CD8-positive, alpha-beta T cell (primary cell): ENCODE measurements at regions of chr7 and their contacts with region 1.

Region 1: DNA sequence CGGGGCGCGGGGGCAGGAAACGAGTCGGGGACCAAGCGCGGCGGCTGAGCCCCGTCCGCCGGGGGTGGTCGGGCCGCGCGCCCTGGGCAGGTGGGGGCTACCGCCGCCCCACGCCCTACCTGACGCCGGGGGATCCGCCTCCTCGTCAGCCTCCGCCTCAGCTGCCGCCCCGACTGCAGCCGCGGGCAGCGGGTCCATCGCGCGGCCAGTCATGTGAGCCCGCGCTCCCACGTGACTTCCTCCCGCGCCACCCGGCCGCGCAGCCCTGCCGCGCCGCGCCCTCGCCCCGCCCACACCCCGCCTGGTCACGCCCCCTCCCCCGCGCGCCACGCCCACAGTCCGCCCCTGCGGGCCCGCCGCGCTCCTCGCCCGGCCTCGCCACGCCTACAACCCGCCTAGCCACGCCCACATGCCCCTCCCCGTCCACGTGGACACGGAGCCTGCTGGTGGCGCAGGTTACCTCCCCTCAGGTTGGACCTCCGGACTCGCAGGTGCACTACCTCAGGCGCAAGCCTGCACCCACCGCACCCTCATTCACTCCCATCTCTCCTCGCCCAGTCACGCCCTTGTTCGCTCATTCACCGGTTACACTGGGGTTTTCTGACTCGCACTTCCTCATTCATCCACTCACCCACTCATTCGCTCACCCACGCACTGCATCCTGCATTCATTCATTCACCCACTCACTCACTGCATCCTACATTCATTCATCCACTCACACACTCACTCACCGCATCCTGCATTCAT is at the start of gene SNX8:
- DNase-seq: peak; percentile 93 to 99 (median 95)
- ATAC-seq: peak; percentile 88
- H3K4me3 ChIP-seq: peak within 1 kb of the TSS; percentile 75 to 76
- H3K4me3 Mint-ChIP-seq: no peak within 1 kb of the TSS
- H3K27ac ChIP-seq: peak within 1 kb of the TSS; percentile 43 to 54
- H3K27ac Mint-ChIP-seq: peak within 1 kb of the TSS; percentile 87
- H3K4me1 ChIP-seq: peaks cover 5% of the 10 kb centered on the region
- H3K4me1 Mint-ChIP-seq: peaks cover 8% of the 10 kb centered on the region
- H3K27me3 ChIP-seq: no peaks in the 10 kb centered on the region
- H3K27me3 Mint-ChIP-seq: no peaks in the 10 kb centered on the region
- CTCF ChIP-seq: no peak
- total RNA-seq, gene SNX8: 4.0 to 6.1 TPM

Region 2: GRCh38 chr7:1532483-1533424 is 781.6 kb before region 1 on chr7:
- CTCF ChIA-PET with region 1: no interaction called
- POLR2A ChIA-PET with region 1: no interaction called
- intact Hi-C with region 1: loop called in 1 of 2 experiments (anchors 1 kb)
- DNase-seq: peak in 8 of 9 experiments; percentile 42 to 75 (median 68)
- ATAC-seq: peak; percentile 48
- H3K4me3 ChIP-seq: peak overlapping the region; percentile 65 to 66
- H3K4me3 Mint-ChIP-seq: peak overlapping the region; percentile 89
- H3K27ac ChIP-seq: peak overlapping the region; percentile 82 to 90
- H3K27ac Mint-ChIP-seq: peak overlapping the region; percentile 99
- H3K4me1 ChIP-seq: peaks cover 33% of the 10 kb centered on the region
- H3K4me1 Mint-ChIP-seq: peaks cover 38% of the 10 kb centered on the region
- H3K27me3 ChIP-seq: no peaks in the 10 kb centered on the region
- H3K27me3 Mint-ChIP-seq: no peaks in the 10 kb centered on the region
- CTCF ChIP-seq: no peak

Region 3: DNA sequence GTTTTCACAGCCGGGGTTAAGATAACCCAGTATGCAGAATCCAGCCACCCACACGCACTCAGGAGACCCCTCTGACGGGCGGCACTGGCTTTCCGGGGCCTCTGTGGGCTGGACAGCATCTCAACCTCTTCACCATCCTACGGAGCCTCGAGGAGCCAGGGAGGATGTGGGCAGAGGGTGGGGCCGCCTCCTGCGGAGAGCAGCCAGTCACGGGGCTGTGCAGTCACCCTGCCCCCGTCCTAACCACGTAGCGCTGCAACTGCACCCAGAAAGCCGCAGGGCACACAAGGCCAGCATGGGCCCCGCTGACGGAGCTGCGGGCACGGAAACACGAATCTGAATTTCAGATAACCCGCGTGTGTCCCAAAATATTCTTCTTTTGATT is 374.0 kb before region 1 on chr7:
- CTCF ChIA-PET with region 1: no interaction called
- POLR2A ChIA-PET with region 1: no interaction called
- intact Hi-C with region 1: loop called in 1 of 2 experiments (anchors 1 kb)
- DNase-seq: peak; percentile 84 to 98 (median 90)
- ATAC-seq: peak; percentile 87
- H3K4me3 ChIP-seq: peak overlapping the region; percentile 65 to 90
- H3K4me3 Mint-ChIP-seq: peak overlapping the region; percentile 94
- H3K27ac ChIP-seq: peak overlapping the region; percentile 88 to 95
- H3K27ac Mint-ChIP-seq: peak overlapping the region; percentile 98
- H3K4me1 ChIP-seq: peaks cover 65% of the 10 kb centered on the region
- H3K4me1 Mint-ChIP-seq: peaks cover 67% of the 10 kb centered on the region
- H3K27me3 ChIP-seq: no peaks in the 10 kb centered on the region
- H3K27me3 Mint-ChIP-seq: no peaks in the 10 kb centered on the region
- CTCF ChIP-seq: no peak

Region 4: DNA sequence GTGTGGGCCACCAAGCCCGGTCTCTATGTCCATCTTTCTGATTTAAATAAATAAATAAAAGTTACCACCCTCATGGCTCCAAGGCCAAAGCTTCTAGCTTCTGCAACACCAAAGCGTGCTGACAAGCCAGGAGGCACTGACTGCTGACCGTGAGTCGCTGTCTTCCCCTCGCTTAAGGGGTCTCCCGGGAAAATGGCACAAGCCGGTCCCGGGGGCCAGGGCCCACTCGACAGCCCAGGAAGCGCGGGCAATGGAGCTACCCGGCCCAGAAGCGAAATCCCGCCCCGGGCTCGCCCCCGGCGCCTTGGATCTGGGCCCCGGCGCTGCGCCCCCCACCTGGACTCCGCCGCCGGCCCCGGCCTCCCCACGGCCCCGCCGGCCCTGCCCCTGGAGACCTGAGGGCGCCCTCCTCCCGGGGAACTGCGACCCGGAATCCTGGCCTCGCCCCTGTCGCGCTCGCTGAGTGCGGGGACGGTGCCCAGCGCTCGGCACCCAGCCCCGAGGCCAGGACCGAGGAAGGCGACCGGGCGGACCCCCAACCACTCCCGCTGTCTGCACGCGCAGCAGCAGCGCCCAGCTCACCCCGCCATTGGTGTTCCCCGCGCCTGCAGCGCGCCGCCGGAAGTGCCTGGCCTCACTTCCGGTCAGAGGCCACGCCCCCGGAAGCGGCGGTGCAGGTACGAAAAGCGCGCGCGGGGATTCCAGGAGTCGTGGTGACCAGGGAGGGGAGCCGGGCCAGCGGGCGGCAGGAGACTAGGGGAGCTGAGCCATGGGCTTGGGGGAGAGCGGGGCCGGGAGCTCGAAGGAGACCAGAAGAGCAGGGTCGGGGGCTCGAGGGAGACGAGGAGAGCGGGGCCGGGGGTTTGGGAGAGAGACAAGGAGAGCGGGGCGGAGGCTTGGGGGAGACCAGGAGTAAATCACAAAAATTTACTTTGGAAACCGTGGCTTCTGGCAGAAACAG is 72.5 kb before region 1 on chr7 and contains the starts of genes MRM2 and NUDT1:
- CTCF ChIA-PET with region 1: no interaction called
- POLR2A ChIA-PET with region 1: no interaction called
- intact Hi-C with region 1: loop called in 1 of 2 experiments (anchors 2 kb)
- DNase-seq: peak in 8 of 9 experiments; percentile 15 to 81 (median 67)
- ATAC-seq: peak; percentile 63
- H3K4me3 ChIP-seq: peak within 1 kb of the TSS; percentile 84 to 93
- H3K4me3 Mint-ChIP-seq: peak within 1 kb of the TSS; percentile 86
- H3K27ac ChIP-seq: peak within 1 kb of the TSS; percentile 63 to 71
- H3K27ac Mint-ChIP-seq: peak within 1 kb of the TSS; percentile 80
- H3K4me1 ChIP-seq: peaks cover 11% of the 10 kb centered on the region
- H3K4me1 Mint-ChIP-seq: peaks cover 15% of the 10 kb centered on the region
- H3K27me3 ChIP-seq: no peaks in the 10 kb centered on the region
- H3K27me3 Mint-ChIP-seq: no peaks in the 10 kb centered on the region
- CTCF ChIP-seq: no peak
- total RNA-seq, gene MRM2: 4.5 to 5.1 TPM
- total RNA-seq, gene NUDT1: 9.0 to 10.6 TPM

Region 5: DNA sequence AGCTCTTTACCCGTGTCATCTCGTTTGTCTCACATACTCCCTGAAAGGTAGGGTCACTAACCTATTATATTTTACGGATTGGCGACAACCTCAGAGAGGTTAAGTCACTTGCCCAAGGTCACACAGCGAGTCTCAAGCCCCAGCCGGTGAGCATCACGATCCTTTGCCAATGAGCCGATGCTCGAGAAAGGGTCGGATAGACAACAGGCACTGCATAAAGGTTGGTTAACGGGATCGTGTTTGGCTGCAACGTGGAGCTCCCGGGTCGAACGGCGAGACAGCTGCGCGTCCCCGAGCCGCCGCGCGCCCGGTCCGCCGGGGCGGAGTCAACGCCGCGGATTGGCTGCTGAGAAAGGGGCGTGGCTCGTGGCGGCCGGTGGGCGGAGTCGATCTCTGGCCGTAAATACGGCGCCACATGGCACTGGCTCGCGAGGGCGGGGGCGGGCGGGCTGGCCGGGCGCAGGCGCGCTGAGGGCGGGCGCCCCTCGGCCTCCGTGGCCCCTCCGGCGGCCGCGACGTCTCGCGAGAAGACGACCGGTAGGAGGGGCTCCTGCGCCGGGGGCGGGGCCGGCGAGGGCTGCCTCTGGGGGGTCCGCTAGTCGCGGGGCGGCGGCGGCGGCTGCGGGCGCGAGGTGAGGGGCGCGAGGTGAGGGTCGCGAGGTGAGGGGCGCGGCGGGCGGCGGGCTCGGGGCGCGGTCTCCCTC is 88.8 kb after region 1 on chr7 and contains the start of gene CHST12:
- CTCF ChIA-PET with region 1: no interaction called
- POLR2A ChIA-PET with region 1: no interaction called
- intact Hi-C with region 1: loop called (anchors 1 kb)
- DNase-seq: peak; percentile 87 to 99 (median 94)
- ATAC-seq: peak; percentile 78
- H3K4me3 ChIP-seq: peak within 1 kb of the TSS; percentile 84
- H3K4me3 Mint-ChIP-seq: peak within 1 kb of the TSS; percentile 84
- H3K27ac ChIP-seq: peak within 1 kb of the TSS; percentile 49 to 66
- H3K27ac Mint-ChIP-seq: peak within 1 kb of the TSS; percentile 88
- H3K4me1 ChIP-seq: peaks cover 53% of the 10 kb centered on the region
- H3K4me1 Mint-ChIP-seq: peaks cover 50% of the 10 kb centered on the region
- H3K27me3 ChIP-seq: no peaks in the 10 kb centered on the region
- H3K27me3 Mint-ChIP-seq: no peaks in the 10 kb centered on the region
- CTCF ChIP-seq: no peak
- total RNA-seq, gene CHST12: 10.3 to 11.7 TPM

Region 6: DNA sequence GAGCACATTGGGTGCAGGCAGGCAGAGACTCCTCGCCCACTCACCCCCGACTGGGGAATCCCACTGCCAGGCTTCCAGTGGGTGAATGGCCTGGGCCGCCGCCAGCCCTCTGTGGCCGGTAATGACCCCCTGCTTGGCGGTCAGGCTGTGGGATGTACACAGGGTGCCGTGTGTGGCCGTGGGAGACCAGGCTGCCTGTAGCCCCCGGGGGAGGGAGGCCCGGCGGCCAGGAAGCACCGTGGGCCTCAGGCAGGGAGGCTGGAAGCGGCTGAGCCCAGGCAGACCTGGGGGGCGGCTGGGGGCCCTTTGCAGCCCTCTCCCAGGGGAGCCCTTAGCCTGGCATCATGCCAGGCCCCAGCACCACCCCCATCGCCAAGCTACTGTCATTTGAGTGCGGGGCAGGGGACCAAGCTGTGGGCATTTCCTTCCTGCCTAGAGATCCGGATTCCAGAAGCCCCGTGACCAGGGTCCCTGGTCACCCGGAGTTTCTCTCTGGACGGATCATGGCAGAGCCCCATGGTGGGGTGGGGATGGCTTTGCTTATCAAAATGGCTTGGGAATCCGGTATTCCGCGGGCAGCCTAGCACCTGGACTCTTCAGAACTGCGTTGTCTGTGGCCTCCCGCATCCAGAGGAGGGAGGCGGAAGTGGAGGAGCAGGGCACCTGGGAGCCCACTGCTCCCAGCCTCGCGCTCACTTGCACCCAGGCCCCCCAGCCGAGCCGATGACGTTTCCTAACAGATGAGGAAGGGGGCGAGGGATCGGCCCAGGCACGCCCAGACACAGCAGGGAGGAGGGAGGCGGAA is 318.6 kb after region 1 on chr7:
- CTCF ChIA-PET with region 1: interaction called, 5 read pairs
- POLR2A ChIA-PET with region 1: no interaction called
- intact Hi-C with region 1: loop called in 1 of 2 experiments (anchors 10 kb)
- DNase-seq: peak in 7 of 9 experiments; percentile 15 to 60 (median 48)
- ATAC-seq: peak; percentile 4
- H3K4me3 ChIP-seq: peak overlapping the region; percentile 69 to 79
- H3K4me3 Mint-ChIP-seq: peak overlapping the region; percentile 88
- H3K27ac ChIP-seq: peak overlapping the region; percentile 43 to 53
- H3K27ac Mint-ChIP-seq: peak overlapping the region; percentile 77
- H3K4me1 ChIP-seq: peaks cover 25% of the 10 kb centered on the region
- H3K4me1 Mint-ChIP-seq: peaks cover 14% of the 10 kb centered on the region
- H3K27me3 ChIP-seq: no peaks in the 10 kb centered on the region
- H3K27me3 Mint-ChIP-seq: no peaks in the 10 kb centered on the region
- CTCF ChIP-seq: no peak